OCI-LY7 (cell line): ENCODE measurements at regions of chr2 and their contacts with region 1.

Region 1: GRCh38 chr2:238158527-238159070 is at the start of gene ERFE:
- DNase-seq: peak; percentile 70
- H3K4me3 ChIP-seq: peak within 1 kb of the TSS; percentile 64
- H3K27ac ChIP-seq: no peak within 1 kb of the TSS
- H3K4me1 ChIP-seq: peaks cover 21% of the 10 kb centered on the region
- CTCF ChIP-seq: no peak
- total RNA-seq, gene ERFE: 7.3 and 8.2 TPM in 2 replicates

Region 2: DNA sequence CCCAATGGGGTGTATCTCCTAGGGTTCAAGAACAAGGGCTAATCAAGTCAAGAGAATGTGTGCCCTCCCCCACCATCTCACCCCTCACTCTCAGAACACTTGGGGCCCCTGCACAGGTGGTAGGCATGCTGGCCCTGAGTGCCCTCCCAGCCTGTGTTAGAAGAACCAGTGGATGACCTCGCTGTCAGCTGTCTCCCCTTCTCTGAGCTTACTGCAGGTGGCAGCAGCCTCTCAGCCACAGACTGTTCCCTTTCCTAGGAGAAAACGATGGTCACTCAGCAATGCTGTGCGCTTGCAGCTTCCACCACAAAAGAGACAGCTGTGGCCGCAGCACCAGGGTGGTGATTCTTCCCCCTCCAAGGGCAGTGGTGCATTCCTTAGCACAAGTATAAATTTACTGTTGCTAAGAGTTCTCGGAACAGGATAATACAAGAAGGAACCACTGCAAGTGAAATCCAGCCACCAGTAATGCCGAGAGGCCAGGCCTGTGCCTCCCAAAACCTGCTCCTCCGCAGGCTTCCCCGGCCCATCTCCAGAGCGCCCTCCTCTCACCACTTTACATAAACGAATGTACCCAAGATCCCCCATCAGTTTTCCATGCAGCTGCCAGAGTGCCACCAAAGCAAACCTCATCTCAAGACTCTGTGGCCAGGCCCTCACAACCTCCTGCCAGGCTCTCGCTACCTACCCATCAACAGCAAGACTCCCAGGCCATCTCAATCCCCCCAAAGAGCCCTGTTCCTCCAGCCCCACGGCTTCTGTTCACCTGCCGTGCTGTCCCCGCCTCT is 300.1 kb before region 1 on chr2:
- CTCF ChIA-PET with region 1: no interaction called
- POLR2A ChIA-PET with region 1: no interaction called
- intact Hi-C with region 1: loop called (anchors 10 kb)
- DNase-seq: peak; percentile 53
- H3K4me3 ChIP-seq: no peak overlapping the region
- H3K27ac ChIP-seq: no peak overlapping the region
- H3K4me1 ChIP-seq: no peaks in the 10 kb centered on the region
- CTCF ChIP-seq: peak; percentile 72

Region 3: GRCh38 chr2:237923481-237924163 is 235.0 kb before region 1 on chr2:
- CTCF ChIA-PET with region 1: no interaction called
- POLR2A ChIA-PET with region 1: no interaction called
- intact Hi-C with region 1: loop called (anchors 10 kb)
- DNase-seq: peak; percentile 74
- H3K4me3 ChIP-seq: no peak overlapping the region
- H3K27ac ChIP-seq: no peak overlapping the region
- H3K4me1 ChIP-seq: peaks cover 11% of the 10 kb centered on the region
- CTCF ChIP-seq: peak; percentile 94

Region 4: GRCh38 chr2:237966565-237967462 is 191.8 kb before region 1 on chr2 and contains the start of gene UBE2F:
- CTCF ChIA-PET with region 1: no interaction called
- POLR2A ChIA-PET with region 1: no interaction called
- intact Hi-C with region 1: loop called (anchors 5 kb)
- DNase-seq: peak; percentile 98
- H3K4me3 ChIP-seq: peak within 1 kb of the TSS; percentile 83
- H3K27ac ChIP-seq: no peak within 1 kb of the TSS
- H3K4me1 ChIP-seq: peaks cover 25% of the 10 kb centered on the region
- CTCF ChIP-seq: no peak
- total RNA-seq, gene UBE2F: 18.1 and 19.9 TPM in 2 replicates

Region 5: GRCh38 chr2:237978058-237978712 is 180.4 kb before region 1 on chr2:
- CTCF ChIA-PET with region 1: no interaction called
- POLR2A ChIA-PET with region 1: no interaction called
- intact Hi-C with region 1: no loop called
- DNase-seq: peak; percentile 6
- H3K4me3 ChIP-seq: no peak overlapping the region
- H3K27ac ChIP-seq: peak overlapping the region; percentile 11
- H3K4me1 ChIP-seq: peaks cover 20% of the 10 kb centered on the region
- CTCF ChIP-seq: no peak

Region 6: DNA sequence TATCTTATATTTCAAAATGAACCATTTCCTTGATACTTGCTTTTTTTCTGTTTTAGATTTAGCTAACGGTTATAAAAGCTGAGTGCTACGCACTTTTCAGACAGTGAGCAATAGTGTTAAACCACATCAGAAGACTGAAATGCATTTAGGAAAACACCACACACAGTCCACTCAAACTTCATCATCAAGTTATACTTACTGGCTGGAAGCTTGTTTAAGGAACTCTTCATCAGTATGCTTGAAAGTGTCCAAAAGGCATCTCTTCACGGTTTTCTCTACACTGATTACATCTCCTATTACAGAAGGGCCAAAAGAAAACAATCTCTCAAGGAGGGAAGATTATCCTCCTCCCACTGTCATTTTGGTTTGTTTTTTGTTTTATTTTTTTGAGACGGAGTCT is 25.2 kb after region 1 on chr2:
- CTCF ChIA-PET with region 1: no interaction called
- POLR2A ChIA-PET with region 1: no interaction called
- intact Hi-C with region 1: no loop called
- DNase-seq: no peak
- H3K4me3 ChIP-seq: no peak overlapping the region
- H3K27ac ChIP-seq: no peak overlapping the region
- H3K4me1 ChIP-seq: no peaks in the 10 kb centered on the region
- CTCF ChIP-seq: no peak

Region 7: DNA sequence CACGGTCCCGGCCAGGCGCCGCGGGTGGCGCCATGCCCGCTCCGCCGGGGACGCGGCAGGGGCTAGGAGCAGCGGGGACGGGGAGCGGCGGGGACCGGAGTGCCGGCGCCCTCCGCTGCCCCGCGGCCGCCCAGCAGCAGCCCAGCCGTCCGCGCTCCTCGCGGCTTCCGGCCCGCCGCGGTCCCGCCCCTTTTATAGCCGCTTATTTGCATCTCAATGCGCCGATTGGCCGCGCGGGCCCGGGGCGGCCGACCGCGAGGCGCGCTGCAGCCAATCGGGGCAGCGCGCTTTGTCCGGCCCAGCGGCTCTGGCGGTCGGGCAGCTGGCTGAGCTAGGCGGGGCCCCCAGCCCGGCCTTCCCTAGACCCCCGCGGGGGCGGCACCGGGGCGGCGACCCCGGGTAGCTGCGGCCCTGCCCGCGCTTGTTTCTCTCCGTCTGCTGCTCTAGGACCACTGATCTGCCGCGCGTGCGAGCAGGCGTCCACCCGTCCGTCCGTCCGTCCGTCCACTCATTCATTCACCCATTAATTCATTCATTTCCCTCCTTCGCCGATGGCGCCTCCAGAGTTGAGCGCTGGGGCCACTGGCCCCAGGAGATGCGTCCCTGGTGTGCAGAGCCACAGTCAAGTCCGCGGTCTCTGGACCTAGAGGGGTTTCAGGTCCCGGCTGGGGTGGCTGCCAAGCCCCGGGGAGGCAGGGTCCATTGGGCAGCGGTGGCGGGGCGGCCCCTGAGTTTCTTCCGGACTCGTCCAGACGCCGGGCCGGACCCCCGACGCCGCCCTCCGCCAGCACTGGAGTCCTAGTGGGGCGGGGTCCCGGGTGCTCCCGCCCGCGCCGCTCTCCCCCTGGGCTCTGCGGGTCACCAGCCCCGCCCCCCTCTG is 81.5 kb after region 1 on chr2 and contains the start of gene HES6:
- CTCF ChIA-PET with region 1: no interaction called
- POLR2A ChIA-PET with region 1: no interaction called
- intact Hi-C with region 1: loop called (anchors 5 kb)
- DNase-seq: peak; percentile 89
- H3K4me3 ChIP-seq: peak within 1 kb of the TSS; percentile 72
- H3K27ac ChIP-seq: no peak within 1 kb of the TSS
- H3K4me1 ChIP-seq: peaks cover 6% of the 10 kb centered on the region
- CTCF ChIP-seq: no peak
- total RNA-seq, gene HES6: 13.1 and 20.5 TPM in 2 replicates

Region 8: DNA sequence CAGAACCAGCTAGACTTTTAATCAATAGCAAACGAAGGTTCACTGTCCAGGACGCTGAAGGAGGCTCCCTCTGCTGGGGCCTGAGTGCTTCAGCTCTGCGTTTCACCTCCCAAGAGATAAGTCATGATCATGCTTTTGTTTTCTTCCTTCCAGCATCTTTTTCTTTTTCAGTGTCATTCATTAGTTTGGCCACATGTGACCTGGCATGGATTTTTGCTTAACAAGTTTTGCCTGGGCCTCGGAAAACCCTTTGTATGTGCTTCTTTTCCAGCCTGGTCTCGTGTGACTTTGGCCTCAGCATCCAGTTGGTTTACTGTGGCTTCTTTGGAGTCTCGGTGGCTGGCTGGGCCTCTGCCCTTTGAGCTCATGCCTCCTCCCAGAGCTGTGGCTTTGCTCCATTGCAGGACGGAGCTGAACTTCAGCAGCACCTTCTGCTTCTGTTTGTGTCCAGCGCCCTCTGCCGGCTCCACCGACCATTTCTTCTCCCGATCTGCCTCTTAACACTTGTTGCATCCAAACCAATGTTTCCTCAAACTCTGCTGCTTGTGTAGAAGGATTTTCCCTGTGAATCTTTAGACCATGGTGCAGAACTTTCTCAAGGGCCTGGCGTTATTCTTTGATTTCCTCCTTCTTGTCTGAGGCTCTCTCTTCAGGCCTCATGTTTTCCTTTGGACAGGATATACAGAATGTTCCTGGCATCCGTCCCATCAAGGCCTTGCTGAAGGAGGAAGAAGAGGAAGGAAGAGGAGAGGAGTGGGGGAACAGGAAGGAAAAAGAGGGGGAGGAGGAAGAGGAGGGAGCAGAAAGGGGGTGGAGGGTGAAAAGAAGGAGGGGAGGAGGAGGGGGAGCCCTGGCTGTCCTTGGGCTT is 104.8 kb after region 1 on chr2:
- CTCF ChIA-PET with region 1: interaction called, 7 read pairs
- POLR2A ChIA-PET with region 1: no interaction called
- intact Hi-C with region 1: loop called (anchors 1 kb)
- DNase-seq: peak; percentile 78
- H3K4me3 ChIP-seq: no peak overlapping the region
- H3K27ac ChIP-seq: no peak overlapping the region
- H3K4me1 ChIP-seq: no peaks in the 10 kb centered on the region
- CTCF ChIP-seq: peak; percentile 95